ENCODE measurements at regions of chr5 and their contacts with region 1.

Region 1: DNA sequence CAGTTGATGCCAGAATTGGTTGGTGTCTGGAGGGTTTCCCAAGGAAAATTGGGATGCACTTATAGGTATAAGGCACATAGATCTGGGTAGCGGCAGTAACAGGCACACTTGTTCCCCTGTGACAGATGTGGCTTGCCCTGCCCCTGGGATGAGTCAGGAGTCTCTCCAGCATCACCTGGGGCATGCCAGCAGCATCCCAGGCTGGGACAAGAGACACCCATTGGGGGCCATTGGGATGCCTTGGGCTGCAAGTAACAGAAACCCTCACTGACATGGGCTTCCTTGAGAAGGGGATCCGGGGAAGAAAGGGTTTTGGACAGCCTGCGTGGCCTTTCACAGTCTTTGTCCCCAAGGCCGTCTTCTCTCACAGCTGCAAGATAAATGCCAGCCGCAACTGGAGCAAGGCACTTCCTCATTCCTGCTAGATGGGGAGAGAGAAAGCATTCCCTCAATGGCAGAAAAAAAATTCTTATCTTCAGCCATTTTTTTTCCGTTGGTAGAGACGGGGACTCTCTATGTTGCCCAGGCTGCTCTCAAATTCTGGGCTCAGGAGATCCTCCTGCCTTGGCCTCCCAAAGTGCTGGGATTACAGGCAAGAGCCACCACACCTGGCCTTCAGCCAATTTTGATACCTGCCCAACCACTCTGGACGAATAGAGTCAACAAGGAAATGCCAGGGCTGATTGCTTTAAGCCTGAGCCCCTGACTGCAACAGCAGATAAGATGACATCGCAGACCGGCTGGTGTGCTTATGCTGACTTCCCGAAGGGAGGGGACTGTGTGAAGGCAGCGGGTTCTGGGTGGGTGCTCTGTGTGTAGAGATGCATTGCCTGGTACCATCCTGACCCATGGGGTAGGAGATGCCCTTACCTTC is 13.4 kb upstream of the RNF130 start:
- DNase-seq: no peak
- ATAC-seq: peak in 2 of 4 donors; percentile 14 to 44
- H3K4me3 ChIP-seq: no peak overlapping the region
- H3K27ac ChIP-seq: no peak overlapping the region
- H3K4me1 ChIP-seq: peaks cover 0 to 4% (median 0%) of the 10 kb centered on the region in 4 donors
- H3K27me3 ChIP-seq: no peaks in the 10 kb centered on the region
- CTCF ChIP-seq: no peak
- POLR2A ChIP-seq: no peak

Region 2: GRCh38 chr5:179974946-179975712 is 109.8 kb before region 1 on chr5:
- intact Hi-C with region 1: loop called in 1 of 2 experiments (anchors 10 kb)
- DNase-seq: peak in 1 of 3 donors; percentile 38
- ATAC-seq: peak; percentile 56 to 71 (median 60)
- H3K4me3 ChIP-seq: no peak overlapping the region
- H3K27ac ChIP-seq: no peak overlapping the region
- H3K4me1 ChIP-seq: peaks cover 0 to 13% (median 6%) of the 10 kb centered on the region in 4 donors
- H3K27me3 ChIP-seq: no peaks in the 10 kb centered on the region
- CTCF ChIP-seq: peak; percentile 5 to 35 (median 32)
- POLR2A ChIP-seq: no peak

Region 3: DNA sequence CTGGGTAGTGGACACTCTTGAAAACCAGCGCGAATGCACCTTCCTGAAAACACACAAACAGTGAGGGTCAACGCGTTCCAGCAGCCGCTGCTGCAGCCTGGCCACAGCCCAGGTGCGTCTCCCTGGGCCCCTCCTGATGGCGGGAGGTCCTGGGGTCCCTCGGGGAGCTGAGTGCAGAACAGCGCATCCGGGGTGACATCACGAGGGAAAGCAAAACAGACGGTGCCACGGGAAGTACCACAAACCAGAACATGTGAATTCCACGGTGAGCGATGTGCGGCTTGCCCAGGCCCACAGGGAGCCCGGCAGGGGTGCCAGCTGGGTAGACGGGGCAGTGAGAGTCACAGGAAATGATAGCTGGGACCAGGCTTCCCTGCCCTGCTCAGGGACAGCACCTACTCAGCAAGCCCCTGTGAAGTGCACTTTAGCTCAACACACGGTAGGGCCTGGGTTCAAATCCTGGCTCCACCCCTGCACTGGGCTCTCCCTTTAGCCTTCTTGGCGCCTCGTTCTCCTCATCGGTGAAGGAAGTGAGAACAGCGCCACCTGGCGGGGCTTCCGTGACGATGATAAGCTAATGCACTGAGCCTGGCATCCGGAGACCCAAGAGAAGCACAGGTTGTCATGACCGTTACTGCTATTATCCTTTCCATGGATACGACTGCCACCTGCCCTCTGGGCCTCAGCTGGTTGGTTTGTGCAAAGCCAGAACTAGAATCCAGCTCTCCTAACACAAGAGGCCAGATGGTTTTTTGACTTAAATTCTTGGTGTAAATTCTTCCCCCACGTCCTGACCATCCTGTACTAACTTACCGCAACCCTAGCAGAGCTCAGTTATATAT is 243.6 kb after region 1 on chr5:
- intact Hi-C with region 1: no loop called
- DNase-seq: peak; percentile 82 to 84 (median 83)
- ATAC-seq: peak; percentile 85 to 95 (median 92)
- H3K4me3 ChIP-seq: no peak overlapping the region
- H3K27ac ChIP-seq: no peak overlapping the region
- H3K4me1 ChIP-seq: no peaks in the 10 kb centered on the region
- H3K27me3 ChIP-seq: no peaks in the 10 kb centered on the region
- CTCF ChIP-seq: peak; percentile 58 to 86 (median 80)
- POLR2A ChIP-seq: no peak